ENCODE measurements at regions of chr1 and their contacts with region 1.

Region 1: GRCh38 chr1:89987170-89987819 is 7.6 kb upstream of the ZNF326 start:
- DNase-seq: no peak
- ATAC-seq: peak; percentile 74
- H3K4me3 Mint-ChIP-seq: no peak overlapping the region
- H3K27ac Mint-ChIP-seq: no peak overlapping the region
- H3K4me1 Mint-ChIP-seq: no peaks in the 10 kb centered on the region
- H3K27me3 Mint-ChIP-seq: no peaks in the 10 kb centered on the region
- CTCF ChIP-seq: peak; percentile 60

Region 2: GRCh38 chr1:89483010-89483756 is 504.1 kb before region 1 on chr1:
- CTCF ChIA-PET with region 1: interaction called, 4 read pairs
- POLR2A ChIA-PET with region 1: no interaction called
- intact Hi-C with region 1: loop called (anchors 1 kb)
- DNase-seq: no peak
- ATAC-seq: peak; percentile 74
- H3K4me3 Mint-ChIP-seq: no peak overlapping the region
- H3K27ac Mint-ChIP-seq: no peak overlapping the region
- H3K4me1 Mint-ChIP-seq: no peaks in the 10 kb centered on the region
- H3K27me3 Mint-ChIP-seq: peaks cover 4% of the 10 kb centered on the region
- CTCF ChIP-seq: no peak

Region 3: GRCh38 chr1:89649783-89650182 is 337.5 kb before region 1 on chr1:
- CTCF ChIA-PET with region 1: no interaction called
- POLR2A ChIA-PET with region 1: no interaction called
- intact Hi-C with region 1: no loop called
- DNase-seq: no peak
- ATAC-seq: no peak
- H3K4me3 Mint-ChIP-seq: no peak overlapping the region
- H3K27ac Mint-ChIP-seq: no peak overlapping the region
- H3K4me1 Mint-ChIP-seq: peaks cover 36% of the 10 kb centered on the region
- H3K27me3 Mint-ChIP-seq: no peaks in the 10 kb centered on the region
- CTCF ChIP-seq: no peak

Region 4: GRCh38 chr1:89780721-89781120 is 206.6 kb before region 1 on chr1:
- CTCF ChIA-PET with region 1: interaction called, 3 read pairs
- POLR2A ChIA-PET with region 1: no interaction called
- intact Hi-C with region 1: loop called (anchors 1 kb)
- DNase-seq: no peak
- ATAC-seq: no peak
- H3K4me3 Mint-ChIP-seq: no peak overlapping the region
- H3K27ac Mint-ChIP-seq: no peak overlapping the region
- H3K4me1 Mint-ChIP-seq: peaks cover 6% of the 10 kb centered on the region
- H3K27me3 Mint-ChIP-seq: peaks cover 3% of the 10 kb centered on the region
- CTCF ChIP-seq: no peak

Region 5: DNA sequence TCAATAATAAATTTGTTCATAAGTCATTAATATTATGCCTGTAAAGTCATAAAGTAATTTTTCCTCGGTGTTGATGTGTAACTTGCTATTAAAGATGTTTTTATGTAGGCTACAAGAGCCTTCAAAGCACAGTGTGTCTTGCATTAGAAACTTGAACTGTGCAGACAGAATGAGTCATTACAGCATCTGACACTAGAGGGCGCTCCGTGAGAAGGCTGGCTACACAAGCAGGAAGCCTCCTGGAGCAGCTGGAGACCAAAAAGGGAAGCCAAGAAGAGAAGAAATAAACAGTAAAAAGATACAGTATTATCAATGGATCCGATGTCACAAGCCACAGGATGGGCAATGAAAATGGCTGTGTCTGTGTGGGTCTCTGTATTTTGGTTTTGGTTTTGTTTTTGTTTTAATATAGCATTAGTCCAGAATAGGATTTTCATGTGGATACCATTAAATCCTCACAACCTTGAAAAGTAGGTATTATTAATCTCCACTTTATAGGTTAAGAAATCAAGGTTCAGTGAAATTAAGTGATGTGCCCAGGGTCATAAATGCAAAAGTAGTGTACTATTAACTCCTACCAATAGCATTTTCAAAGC is 182.6 kb before region 1 on chr1:
- CTCF ChIA-PET with region 1: interaction called, 47 read pairs
- POLR2A ChIA-PET with region 1: no interaction called
- intact Hi-C with region 1: loop called (anchors 1 kb)
- DNase-seq: peak; percentile 59
- ATAC-seq: peak; percentile 94
- H3K4me3 Mint-ChIP-seq: no peak overlapping the region
- H3K27ac Mint-ChIP-seq: no peak overlapping the region
- H3K4me1 Mint-ChIP-seq: no peaks in the 10 kb centered on the region
- H3K27me3 Mint-ChIP-seq: no peaks in the 10 kb centered on the region
- CTCF ChIP-seq: peak; percentile 92

Region 6: DNA sequence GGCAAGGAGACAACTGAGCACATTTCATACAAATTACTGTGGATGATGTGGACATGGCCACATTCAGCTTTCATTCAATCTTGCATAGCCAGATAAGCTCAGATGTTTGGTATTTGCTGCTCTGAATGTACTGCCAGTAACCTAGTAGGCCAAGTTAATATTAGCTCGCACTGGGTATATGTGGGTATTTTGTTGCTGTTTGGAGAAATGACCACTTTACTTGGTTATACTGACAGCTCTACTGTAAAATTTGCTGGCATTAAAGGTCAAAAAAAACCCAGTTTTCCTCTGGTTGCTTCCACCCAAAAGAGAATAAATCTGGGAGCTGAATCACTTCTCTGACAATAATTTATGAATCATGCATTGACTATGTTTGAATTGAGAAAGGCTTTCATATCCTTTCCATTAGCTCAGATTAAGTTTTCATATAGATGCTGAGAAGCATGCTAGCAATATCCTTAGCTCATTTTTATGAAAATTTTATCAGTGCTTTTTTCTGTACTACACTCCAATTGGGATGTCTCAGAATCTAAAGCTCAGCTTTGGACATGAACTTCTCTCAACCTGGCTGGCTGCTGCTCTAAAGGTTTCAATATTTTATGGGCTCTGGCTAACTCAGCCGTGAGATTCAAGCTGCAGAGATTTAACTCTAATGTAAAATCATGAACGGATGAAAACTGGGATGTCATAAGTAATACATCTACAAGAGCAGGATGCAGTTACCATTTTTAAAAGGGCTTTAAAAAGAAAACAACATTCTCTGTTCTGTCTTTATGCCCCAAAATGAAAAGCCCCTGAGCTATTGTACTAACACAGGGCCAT is 399.8 kb after region 1 on chr1:
- CTCF ChIA-PET with region 1: no interaction called
- POLR2A ChIA-PET with region 1: no interaction called
- intact Hi-C with region 1: no loop called
- DNase-seq: no peak
- ATAC-seq: no peak
- H3K4me3 Mint-ChIP-seq: no peak overlapping the region
- H3K27ac Mint-ChIP-seq: no peak overlapping the region
- H3K4me1 Mint-ChIP-seq: no peaks in the 10 kb centered on the region
- H3K27me3 Mint-ChIP-seq: no peaks in the 10 kb centered on the region
- CTCF ChIP-seq: no peak

Region 7: GRCh38 chr1:90761781-90762589 is 774.7 kb after region 1 on chr1:
- CTCF ChIA-PET with region 1: no interaction called
- POLR2A ChIA-PET with region 1: no interaction called
- intact Hi-C with region 1: no loop called
- DNase-seq: no peak
- ATAC-seq: no peak
- H3K4me3 Mint-ChIP-seq: no peak overlapping the region
- H3K27ac Mint-ChIP-seq: no peak overlapping the region
- H3K4me1 Mint-ChIP-seq: no peaks in the 10 kb centered on the region
- H3K27me3 Mint-ChIP-seq: peaks cover 17% of the 10 kb centered on the region
- CTCF ChIP-seq: no peak

Measured in activated B cell treated with CpG ODN at 0.5 μM for 24 hours (primary cell).